ENCODE measurements at regions of chr1 and their contacts with region 1.

Region 1: DNA sequence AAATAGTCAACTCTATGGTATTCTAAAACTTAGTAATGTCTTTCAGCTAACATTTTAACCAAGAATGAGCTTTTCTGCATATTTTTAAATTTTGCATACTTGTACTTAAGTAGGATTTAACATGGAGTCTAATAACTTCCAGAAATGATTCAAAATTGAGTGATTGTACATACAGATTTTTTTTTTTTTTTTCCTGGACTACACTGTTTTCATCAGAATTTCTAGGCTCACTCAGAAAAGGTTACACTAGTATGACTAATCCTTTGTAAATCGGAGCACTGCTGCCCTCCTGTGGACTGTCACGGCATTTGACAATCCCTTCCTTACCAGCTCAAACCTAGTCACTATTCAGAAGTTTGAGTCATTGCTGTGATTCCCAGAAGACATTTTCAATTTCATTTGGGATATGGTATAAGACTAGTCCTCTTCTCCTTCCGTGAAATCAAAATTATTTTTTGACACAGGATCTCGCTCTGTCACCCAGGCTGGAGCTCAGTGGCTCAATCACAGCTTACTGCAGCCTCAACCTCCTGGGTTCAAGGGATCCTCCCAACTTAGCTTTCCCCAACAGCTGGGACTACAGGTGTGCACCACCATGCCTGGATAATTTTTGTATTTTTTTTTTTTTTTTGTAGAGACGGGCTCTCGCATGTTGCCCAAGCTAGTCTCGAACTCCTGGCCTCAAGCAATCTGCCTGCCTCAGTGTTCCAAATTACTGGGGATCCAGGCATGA is 45.5 kb downstream of the CD46 start:
- DNase-seq: peak; percentile 76 to 83
- ATAC-seq: peak; percentile 69 to 89 (median 78)
- H3K4me3 ChIP-seq: no peak overlapping the region
- H3K27ac ChIP-seq: peak overlapping the region in 7 of 10 donors; percentile 4 to 40 (median 20)
- H3K4me1 ChIP-seq: peaks cover 0 to 24% (median 7%) of the 10 kb centered on the region in 9 donors
- H3K27me3 ChIP-seq: no peaks in the 10 kb centered on the region
- CTCF ChIP-seq: peak; percentile 73 to 87 (median 80)

Region 2: DNA sequence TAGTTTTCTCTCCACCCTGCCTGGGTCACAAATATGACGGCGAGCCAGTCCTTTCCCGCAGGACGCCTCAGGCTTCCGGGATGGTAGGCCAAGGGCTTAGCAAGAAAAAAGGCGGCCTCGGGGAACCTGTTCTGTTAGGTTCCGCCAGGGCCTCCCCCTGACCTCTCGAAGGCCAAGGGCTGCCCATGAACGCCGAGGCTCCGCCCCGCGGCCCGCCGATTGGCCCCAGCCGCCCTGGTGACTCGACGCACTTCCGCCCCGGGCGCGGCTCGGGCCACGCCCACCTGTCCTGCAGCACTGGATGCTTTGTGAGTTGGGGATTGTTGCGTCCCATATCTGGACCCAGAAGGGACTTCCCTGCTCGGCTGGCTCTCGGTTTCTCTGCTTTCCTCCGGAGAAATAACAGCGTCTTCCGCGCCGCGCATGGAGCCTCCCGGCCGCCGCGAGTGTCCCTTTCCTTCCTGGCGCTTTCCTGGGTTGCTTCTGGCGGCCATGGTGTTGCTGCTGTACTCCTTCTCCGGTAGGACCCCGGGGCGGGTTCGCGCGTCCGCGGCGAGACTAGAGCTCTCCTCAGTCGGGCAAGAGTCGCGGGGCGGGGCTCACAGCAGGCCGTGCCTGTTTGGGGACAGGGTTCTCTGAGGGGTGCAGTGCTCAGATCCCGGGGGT is 45.5 kb before region 1 on chr1 and contains the start of gene CD46:
- intact Hi-C with region 1: loop called in 1 of 10 experiments (anchors 5 kb)
- DNase-seq: peak; percentile 96 to 98
- ATAC-seq: peak; percentile 99
- H3K4me3 ChIP-seq: peak within 1 kb of the TSS; percentile 58 to 95 (median 86)
- H3K27ac ChIP-seq: peak within 1 kb of the TSS; percentile 77 to 95 (median 94)
- H3K4me1 ChIP-seq: peaks cover 3 to 69% (median 63%) of the 10 kb centered on the region in 9 donors
- H3K27me3 ChIP-seq: no peaks in the 10 kb centered on the region
- CTCF ChIP-seq: peak in 2 of 9 donors; percentile 15 to 17
- total RNA-seq, gene CD46: 84.0 to 114 (median 97.0) TPM

Region 3: GRCh38 chr1:207766569-207766968 is 30.8 kb before region 1 on chr1:
- intact Hi-C with region 1: loop called in 1 of 10 experiments (anchors 2 kb)
- DNase-seq: no peak
- ATAC-seq: no peak
- H3K4me3 ChIP-seq: no peak overlapping the region
- H3K27ac ChIP-seq: no peak overlapping the region
- H3K4me1 ChIP-seq: no peaks in the 10 kb centered on the region
- H3K27me3 ChIP-seq: no peaks in the 10 kb centered on the region
- CTCF ChIP-seq: no peak

Region 4: DNA sequence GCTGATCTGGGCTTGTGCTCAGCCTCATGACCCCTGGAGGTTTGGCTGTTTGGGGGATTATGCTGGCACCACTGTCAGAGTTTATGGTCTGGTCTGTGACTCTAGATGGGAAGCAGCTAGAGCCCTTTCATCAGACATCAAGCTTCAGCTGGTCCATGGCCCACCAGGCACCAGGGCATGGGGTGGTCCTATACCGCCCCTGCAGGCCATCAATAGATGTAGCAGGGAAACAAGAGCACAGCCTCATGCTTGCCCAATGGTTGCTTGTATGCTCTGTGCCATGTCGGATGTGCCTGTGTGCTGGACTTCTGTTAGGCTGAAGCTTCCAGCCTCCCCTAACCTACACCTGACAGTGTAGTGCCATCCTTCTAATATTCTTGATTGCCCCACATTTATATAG is 184.6 kb after region 1 on chr1:
- intact Hi-C with region 1: no loop called
- DNase-seq: no peak
- ATAC-seq: peak in 4 of 8 donors; percentile 35 to 58 (median 51)
- H3K4me3 ChIP-seq: no peak overlapping the region
- H3K27ac ChIP-seq: no peak overlapping the region
- H3K4me1 ChIP-seq: no peaks in the 10 kb centered on the region
- H3K27me3 ChIP-seq: no peaks in the 10 kb centered on the region
- CTCF ChIP-seq: peak in 8 of 9 donors; percentile 13 to 55 (median 37)

Region 5: DNA sequence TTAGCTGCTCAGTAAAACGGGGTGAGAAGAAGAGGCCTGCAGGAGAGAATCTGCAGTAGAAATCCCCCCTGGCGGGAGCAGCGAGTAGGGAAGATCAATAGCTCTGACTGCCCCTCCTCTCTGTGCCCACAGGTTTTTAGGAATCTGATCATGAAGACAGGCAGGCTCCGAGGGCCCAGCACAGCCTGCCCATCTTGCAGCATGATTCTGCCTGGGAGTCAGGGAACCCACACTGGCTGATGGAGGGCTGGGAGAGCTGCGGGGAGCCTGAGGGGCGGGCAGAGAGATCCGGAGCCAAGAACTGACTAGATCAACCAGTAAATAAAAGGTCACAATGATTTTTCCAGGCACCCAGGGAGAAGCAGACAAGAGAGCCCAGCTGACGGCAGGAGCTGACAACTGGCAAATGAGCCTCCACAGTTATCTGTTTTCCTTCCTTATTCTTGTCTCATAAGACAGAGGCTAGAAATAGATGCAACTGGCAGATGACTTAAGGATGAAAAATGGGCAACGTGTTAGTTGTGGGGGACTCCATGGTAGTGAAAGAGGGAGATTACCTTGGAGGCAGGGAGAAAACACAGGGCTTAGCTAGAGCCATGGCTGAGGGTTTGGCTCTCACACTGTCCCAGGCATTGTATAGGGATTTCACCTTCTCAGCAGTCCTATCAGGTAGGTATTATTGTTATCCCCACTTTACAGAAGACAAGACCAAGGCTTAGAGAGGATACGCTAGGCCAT is 330.6 kb after region 1 on chr1:
- intact Hi-C with region 1: no loop called
- DNase-seq: no peak
- ATAC-seq: no peak
- H3K4me3 ChIP-seq: no peak overlapping the region
- H3K27ac ChIP-seq: no peak overlapping the region
- H3K4me1 ChIP-seq: peaks cover 6 to 32% (median 19%) of the 10 kb centered on the region in 9 donors
- H3K27me3 ChIP-seq: peaks cover 0 to 4% (median 0%) of the 10 kb centered on the region in 7 donors
- CTCF ChIP-seq: no peak